ENCODE measurements at regions of chr14 and their contacts with region 1.

Region 1: DNA sequence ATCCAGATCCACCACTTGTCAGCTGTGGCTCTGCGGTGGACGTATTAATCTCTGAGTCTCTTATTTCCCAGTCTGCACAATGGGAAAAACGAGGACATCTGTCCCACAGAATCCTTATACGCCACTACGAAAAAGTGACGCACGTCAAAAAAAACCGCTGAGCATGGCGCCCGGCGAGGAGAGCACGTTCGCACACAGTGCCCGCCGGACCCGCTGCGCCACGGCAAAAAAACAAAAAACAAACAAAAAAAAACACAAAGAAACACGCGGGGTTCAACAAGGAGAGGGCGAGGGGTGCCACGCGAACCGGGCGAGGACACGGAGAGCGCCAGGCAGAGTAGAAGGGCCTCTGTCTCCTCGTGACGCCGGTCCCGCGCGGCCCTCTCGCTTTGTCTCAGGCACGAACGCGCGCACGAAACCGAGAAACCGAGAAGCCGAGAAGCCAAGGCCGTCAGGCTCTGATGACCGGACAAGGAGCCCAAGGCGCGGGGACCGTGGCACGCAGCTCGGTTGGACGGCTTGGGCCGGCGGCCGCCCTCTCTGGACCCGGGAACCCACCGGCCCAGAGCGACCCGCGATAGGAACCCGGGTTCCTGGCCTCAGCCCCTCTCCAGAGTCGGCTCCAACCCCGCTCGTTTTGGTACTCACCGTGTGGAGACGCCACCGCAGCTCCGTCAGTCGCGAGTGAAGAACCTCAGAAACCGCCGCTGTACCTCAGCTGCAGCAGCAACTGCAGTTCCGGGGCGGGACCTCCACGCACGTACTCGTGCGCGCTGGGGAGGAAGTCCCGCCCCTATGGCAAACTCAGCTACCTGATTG is at the start of gene DDX24:
- DNase-seq: peak; percentile 98
- H3K4me3 Mint-ChIP-seq: peak within 1 kb of the TSS; percentile 99
- H3K27ac Mint-ChIP-seq: peak within 1 kb of the TSS; percentile 99
- H3K4me1 Mint-ChIP-seq: peaks cover 50% of the 10 kb centered on the region
- H3K27me3 Mint-ChIP-seq: no peaks in the 10 kb centered on the region
- total RNA-seq, gene DDX24: 241 to 252 TPM

Region 2: DNA sequence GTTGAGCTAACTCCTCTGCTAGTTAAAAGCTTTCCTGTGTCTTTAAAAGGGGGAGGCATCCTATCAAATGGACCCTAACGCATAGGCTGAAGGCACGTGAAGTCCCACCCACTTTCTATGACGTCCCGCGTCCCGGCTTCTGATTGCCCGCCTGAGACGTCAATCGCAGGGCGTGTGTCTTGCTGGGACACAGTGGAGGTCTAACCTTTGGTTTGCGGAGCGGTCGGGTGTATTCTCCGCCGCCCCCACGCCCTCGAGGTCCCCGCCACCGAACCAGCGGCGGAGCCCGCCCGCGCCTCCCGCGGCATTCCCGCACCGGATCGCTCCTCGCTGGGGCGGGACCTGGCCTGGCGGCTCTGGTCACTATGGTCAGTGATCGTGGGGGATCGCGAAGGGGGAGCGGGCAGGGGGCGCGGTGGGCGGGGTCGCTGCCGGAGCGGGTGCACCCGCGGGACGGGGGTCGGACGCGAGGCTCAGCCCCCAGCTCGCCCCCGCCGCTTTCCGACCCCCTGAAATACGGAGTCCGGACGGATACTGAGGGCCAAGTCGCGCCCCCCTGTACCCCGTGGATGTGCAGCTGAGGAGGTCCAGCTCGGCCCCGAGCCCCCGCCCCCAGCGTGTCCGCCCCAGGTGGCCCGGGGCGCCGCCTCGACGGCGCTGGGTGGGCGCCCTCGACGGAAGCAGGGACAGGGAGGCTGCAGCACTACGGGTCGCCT is 54.3 kb before region 1 on chr14 and contains the start of gene OTUB2:
- CTCF ChIA-PET with region 1: interaction called, 4 read pairs
- POLR2A ChIA-PET with region 1: interaction called, 5 read pairs
- intact Hi-C with region 1: loop called (anchors 2 kb)
- DNase-seq: peak; percentile 99
- H3K4me3 Mint-ChIP-seq: peak within 1 kb of the TSS; percentile 64
- H3K27ac Mint-ChIP-seq: no peak within 1 kb of the TSS
- H3K4me1 Mint-ChIP-seq: peaks cover 43% of the 10 kb centered on the region
- H3K27me3 Mint-ChIP-seq: no peaks in the 10 kb centered on the region
- total RNA-seq, gene OTUB2: 2.0 to 2.9 TPM

Region 3: GRCh38 chr14:94056579-94057308 is 23.9 kb before region 1 on chr14:
- CTCF ChIA-PET with region 1: interaction called, 6 read pairs
- POLR2A ChIA-PET with region 1: interaction called, 8 read pairs
- intact Hi-C with region 1: loop called (anchors 1 kb)
- DNase-seq: peak; percentile 57
- H3K4me3 Mint-ChIP-seq: no peak overlapping the region
- H3K27ac Mint-ChIP-seq: peak overlapping the region; percentile 71
- H3K4me1 Mint-ChIP-seq: peaks cover 72% of the 10 kb centered on the region
- H3K27me3 Mint-ChIP-seq: no peaks in the 10 kb centered on the region

Region 4: DNA sequence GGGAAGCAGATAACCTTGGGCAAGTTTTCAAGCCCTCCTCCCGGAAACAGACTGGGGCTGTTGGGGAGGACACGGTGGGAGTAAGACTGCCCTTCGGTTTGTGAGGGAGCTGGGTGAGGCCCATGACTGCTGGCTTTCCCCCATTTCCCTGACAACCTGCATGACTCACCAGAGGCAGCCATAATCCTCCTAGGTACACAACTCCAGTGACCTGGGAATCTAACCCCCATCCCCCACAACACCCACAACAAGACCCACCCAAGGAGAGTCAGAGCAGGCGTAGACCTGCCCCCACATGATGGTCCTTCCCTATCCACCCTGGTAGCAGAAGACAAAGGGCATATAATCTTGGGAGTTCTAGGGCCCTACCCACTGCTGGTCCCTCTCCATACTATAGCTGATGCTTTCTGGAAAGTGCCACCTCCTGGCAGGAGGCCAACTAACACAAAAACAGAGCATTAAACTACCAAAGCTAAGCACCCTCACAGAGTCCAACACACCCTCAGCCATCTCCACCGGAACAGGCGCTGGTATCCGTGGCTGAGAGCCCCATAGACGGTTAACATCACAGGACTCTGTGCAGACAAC is 14.5 kb before region 1 on chr14:
- CTCF ChIA-PET with region 1: interaction called, 5 read pairs
- POLR2A ChIA-PET with region 1: interaction called, 7 read pairs
- intact Hi-C with region 1: loop called (anchors 2 kb)
- DNase-seq: no peak
- H3K4me3 Mint-ChIP-seq: no peak overlapping the region
- H3K27ac Mint-ChIP-seq: peak overlapping the region; percentile 68
- H3K4me1 Mint-ChIP-seq: peaks cover 80% of the 10 kb centered on the region
- H3K27me3 Mint-ChIP-seq: no peaks in the 10 kb centered on the region

Region 5: GRCh38 chr14:94100847-94101246 is 20.2 kb after region 1 on chr14:
- CTCF ChIA-PET with region 1: no interaction called
- POLR2A ChIA-PET with region 1: no interaction called
- intact Hi-C with region 1: no loop called
- DNase-seq: no peak
- H3K4me3 Mint-ChIP-seq: no peak overlapping the region
- H3K27ac Mint-ChIP-seq: no peak overlapping the region
- H3K4me1 Mint-ChIP-seq: no peaks in the 10 kb centered on the region
- H3K27me3 Mint-ChIP-seq: no peaks in the 10 kb centered on the region

Region 6: DNA sequence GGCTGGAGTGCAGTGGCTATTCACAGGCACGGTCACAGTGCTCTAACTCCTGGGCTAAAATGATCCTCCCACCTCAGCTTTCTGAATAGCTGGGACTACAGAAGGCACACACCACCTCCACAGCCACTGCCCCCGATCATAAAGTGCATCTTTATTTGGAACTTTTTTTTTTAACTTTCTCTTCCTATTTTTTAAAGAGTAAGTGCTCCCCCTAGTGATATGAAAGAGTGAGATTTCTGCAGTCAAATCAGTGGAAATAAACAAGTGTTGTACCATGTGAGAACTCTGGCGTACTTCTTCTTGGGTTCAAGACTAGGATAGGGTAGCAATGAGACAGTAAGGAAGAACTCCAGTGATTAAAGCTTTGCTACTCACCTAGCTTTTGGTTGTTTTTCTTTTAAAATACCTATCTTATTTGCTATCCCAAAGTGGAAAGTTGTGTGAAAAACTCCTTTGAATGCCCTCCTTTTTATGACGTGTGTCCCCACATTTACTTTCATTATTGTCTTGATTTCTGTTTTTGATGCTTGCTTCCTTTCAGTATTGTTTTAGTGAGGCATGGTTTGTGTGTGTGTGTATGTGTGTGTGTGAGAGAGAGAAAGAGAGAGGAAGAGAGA is 100.1 kb after region 1 on chr14:
- CTCF ChIA-PET with region 1: interaction called, 3 read pairs
- POLR2A ChIA-PET with region 1: no interaction called
- intact Hi-C with region 1: loop called (anchors 2 kb)
- DNase-seq: no peak
- H3K4me3 Mint-ChIP-seq: peak overlapping the region; percentile 54
- H3K27ac Mint-ChIP-seq: peak overlapping the region; percentile 67
- H3K4me1 Mint-ChIP-seq: peaks cover 50% of the 10 kb centered on the region
- H3K27me3 Mint-ChIP-seq: no peaks in the 10 kb centered on the region

Region 7: DNA sequence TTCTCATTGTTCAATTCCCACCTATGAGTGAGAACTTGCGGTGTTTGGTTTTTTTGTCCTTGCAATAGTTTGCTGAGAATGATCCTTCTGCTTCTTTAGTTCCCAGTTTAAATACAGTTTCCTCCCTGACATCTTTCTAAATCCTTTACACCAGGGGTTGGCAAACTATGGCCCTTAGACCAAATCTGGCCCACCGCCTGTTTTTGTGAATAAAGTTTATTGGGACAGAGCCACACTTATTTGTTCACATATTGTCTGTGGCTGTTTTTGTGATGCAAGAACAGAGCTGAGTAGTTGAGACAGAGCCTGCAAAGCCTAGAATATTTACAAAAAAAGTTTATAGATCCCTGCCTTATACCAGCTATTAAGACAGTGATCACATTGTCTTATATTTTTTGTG is 158.7 kb after region 1 on chr14:
- CTCF ChIA-PET with region 1: no interaction called
- POLR2A ChIA-PET with region 1: no interaction called
- intact Hi-C with region 1: no loop called
- DNase-seq: no peak
- H3K4me3 Mint-ChIP-seq: no peak overlapping the region
- H3K27ac Mint-ChIP-seq: no peak overlapping the region
- H3K4me1 Mint-ChIP-seq: peaks cover 16% of the 10 kb centered on the region
- H3K27me3 Mint-ChIP-seq: no peaks in the 10 kb centered on the region

Region 8: GRCh38 chr14:94392510-94392935 is 311.8 kb after region 1 on chr14:
- CTCF ChIA-PET with region 1: no interaction called
- POLR2A ChIA-PET with region 1: no interaction called
- intact Hi-C with region 1: no loop called
- DNase-seq: peak; percentile 82
- H3K4me3 Mint-ChIP-seq: no peak overlapping the region
- H3K27ac Mint-ChIP-seq: peak overlapping the region; percentile 86
- H3K4me1 Mint-ChIP-seq: peaks cover 51% of the 10 kb centered on the region
- H3K27me3 Mint-ChIP-seq: peaks cover 2% of the 10 kb centered on the region

Region 9: GRCh38 chr14:95034788-95035187 is 954.1 kb after region 1 on chr14:
- CTCF ChIA-PET with region 1: no interaction called
- POLR2A ChIA-PET with region 1: no interaction called
- intact Hi-C with region 1: no loop called
- DNase-seq: no peak
- H3K4me3 Mint-ChIP-seq: no peak overlapping the region
- H3K27ac Mint-ChIP-seq: no peak overlapping the region
- H3K4me1 Mint-ChIP-seq: no peaks in the 10 kb centered on the region
- H3K27me3 Mint-ChIP-seq: peaks cover 5% of the 10 kb centered on the region